Heart left ventricle (tissue), 16 donors: ENCODE measurements at regions of chr17 and their contacts with region 1.

Region 1: GRCh38 chr17:7989781-7990655 is 12.4 kb upstream of the GUCY2D start:
- DNase-seq: peak; percentile 73 to 92 (median 83)
- ATAC-seq: peak; percentile 54 to 87 (median 84)
- H3K4me3 ChIP-seq: peak overlapping the region; percentile 16 to 75 (median 63)
- H3K27ac ChIP-seq: peak overlapping the region in 5 of 12 donors; percentile 8 to 84 (median 62)
- H3K4me1 ChIP-seq: peaks cover 0 to 19% (median 5%) of the 10 kb centered on the region in 12 donors
- H3K27me3 ChIP-seq: peaks cover 0 to 6% (median 0%) of the 10 kb centered on the region in 9 donors
- CTCF ChIP-seq: peak; percentile 93 to 100 (median 95)
- POLR2A ChIP-seq: no peak

Region 2: GRCh38 chr17:7021993-7022778 is 967.8 kb before region 1 on chr17:
- intact Hi-C with region 1: no loop called
- DNase-seq: peak; percentile 83 to 92 (median 86)
- ATAC-seq: peak; percentile 38 to 71 (median 60)
- H3K4me3 ChIP-seq: peak overlapping the region; percentile 32 to 79 (median 62)
- H3K27ac ChIP-seq: peak overlapping the region; percentile 80 to 99 (median 96)
- H3K4me1 ChIP-seq: peaks cover 8 to 82% (median 42%) of the 10 kb centered on the region in 12 donors
- H3K27me3 ChIP-seq: peaks cover 0 to 24% (median 0%) of the 10 kb centered on the region in 9 donors
- CTCF ChIP-seq: peak; percentile 87 to 99 (median 98)
- POLR2A ChIP-seq: peak in 1 of 2 donors; percentile 52

Region 3: DNA sequence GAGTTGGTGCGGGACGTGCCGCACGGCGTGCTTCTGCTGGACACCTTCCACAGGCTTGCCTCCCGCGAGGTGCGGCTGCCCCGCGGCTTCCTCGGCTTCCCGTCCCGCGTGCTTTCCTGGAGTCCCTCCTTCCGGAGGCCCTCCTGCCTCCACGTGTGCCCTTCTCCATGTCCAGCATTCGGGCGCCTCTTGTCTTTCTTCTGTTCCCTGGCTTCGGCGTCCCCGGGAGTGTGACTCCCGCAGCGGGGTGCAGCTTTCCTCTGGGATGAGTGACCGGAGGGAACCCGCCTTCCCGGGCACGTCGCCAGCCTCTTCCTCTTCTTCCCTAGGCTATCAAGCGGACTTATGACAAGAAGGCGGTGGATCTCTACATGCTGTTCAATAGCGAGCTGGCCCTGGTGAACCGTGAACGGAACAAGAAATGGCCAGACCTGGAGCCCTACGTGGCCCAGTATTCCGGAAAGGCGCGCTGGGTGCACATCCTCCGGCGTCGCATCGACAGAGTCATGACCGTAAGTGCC is 249.5 kb before region 1 on chr17:
- intact Hi-C with region 1: loop called in 8 of 10 experiments (anchors 2 to 10 kb)
- DNase-seq: no peak
- ATAC-seq: peak in 1 of 4 donors; percentile 30
- H3K4me3 ChIP-seq: peak overlapping the region in 8 of 12 donors; percentile 12 to 35 (median 24)
- H3K27ac ChIP-seq: no peak overlapping the region
- H3K4me1 ChIP-seq: peaks cover 0 to 13% (median 0%) of the 10 kb centered on the region in 12 donors
- H3K27me3 ChIP-seq: peaks cover 0 to 13% (median 4%) of the 10 kb centered on the region in 9 donors
- CTCF ChIP-seq: no peak
- POLR2A ChIP-seq: no peak

Region 4: DNA sequence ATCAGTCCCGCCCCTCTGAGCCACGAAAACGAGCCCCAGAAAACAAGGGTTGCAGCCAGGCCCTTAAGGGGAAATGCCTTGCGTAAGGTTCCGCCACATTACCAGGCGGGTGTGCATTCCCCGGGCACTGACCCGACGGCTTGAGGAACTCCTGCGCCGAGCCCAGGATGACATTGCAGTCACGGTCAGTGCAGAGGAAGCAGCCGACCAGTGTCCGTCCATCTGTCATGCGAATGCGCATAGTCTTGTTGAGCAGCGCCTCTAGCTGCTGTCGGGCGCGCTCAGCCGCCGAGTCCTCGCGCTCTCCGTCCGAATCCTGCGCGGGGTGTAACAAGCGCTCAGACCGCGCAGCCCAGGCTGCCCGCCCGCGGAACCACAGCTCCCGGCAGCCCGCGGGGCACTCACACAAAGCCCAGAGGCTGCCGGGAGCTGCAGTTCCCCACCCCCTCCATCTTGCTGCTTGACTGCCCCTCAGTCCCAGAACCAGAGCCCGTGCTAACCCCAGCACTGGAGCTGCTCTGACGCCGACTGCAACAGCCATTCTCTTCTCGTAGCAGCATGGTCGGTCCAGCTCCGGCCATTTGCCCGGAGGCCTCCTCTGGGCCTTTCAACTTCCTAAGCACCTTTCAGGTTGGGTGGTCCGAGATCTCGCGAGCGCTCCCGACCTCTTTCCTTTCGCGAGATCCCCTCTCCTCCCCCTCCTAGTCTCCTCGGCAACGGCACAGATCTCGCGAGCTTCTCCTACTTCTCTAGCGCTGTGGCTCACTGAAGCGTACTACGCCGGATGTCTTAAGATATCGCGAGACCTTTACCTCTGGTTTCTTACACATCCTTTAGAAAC is 132.9 kb before region 1 on chr17 and contains the start of gene NAA38:
- intact Hi-C with region 1: loop called in 8 of 10 experiments (anchors 2 to 5 kb)
- DNase-seq: peak; percentile 96 to 98 (median 97)
- ATAC-seq: peak; percentile 87 to 90 (median 90)
- H3K4me3 ChIP-seq: peak within 1 kb of the TSS; percentile 39 to 85 (median 68)
- H3K27ac ChIP-seq: peak within 1 kb of the TSS; percentile 74 to 97 (median 92)
- H3K4me1 ChIP-seq: peaks cover 0 to 45% (median 33%) of the 10 kb centered on the region in 12 donors
- H3K27me3 ChIP-seq: no peaks in the 10 kb centered on the region
- CTCF ChIP-seq: peak in 10 of 12 donors; percentile 12 to 74 (median 44)
- POLR2A ChIP-seq: peak in 1 of 2 donors; percentile 32
- total RNA-seq, gene NAA38: 60.9 to 141 (median 72.4) TPM

Region 5: DNA sequence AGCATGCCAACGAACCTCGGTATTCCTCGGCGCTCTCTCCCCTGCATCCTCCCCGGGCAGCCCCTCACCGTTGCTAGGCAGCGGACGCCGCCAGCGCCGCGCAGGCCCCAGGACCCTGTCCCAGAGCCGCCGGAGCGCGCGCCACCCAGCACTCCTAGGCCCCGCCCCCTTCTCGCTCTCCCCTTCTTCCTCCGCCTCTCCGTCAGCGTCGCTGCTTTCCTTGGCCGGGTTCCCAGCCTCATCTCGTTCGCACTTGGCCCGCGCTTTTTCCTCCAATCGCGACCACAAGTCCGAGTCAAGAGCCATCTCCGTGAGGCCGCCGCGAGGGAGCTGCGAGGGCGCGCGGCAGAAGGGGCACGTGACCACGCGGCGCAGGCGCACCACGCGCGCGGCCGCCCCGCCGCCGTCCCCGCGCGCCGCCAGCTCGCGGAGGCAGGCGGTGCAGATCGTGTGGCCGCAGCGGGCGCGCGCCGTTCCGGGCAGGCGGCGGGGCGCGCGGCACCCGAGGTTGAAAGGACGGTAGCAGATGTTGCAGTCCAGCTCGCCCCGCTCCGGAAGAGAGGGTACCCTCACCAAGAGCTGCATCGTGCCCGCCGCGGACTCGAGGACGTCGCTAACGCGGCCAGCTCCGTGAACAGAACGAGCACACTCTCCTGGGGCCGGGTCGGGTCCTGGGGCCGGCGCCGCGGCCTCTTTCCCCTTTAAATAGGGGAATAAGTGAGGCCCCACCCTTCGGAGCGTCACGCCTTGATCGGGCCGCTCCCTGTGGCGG is 74.2 kb before region 1 on chr17 and contains the start of gene RNF227:
- intact Hi-C with region 1: loop called (anchors 1 to 2 kb)
- DNase-seq: peak; percentile 92 to 94 (median 92)
- ATAC-seq: peak; percentile 84 to 92 (median 90)
- H3K4me3 ChIP-seq: peak within 1 kb of the TSS; percentile 37 to 83 (median 63)
- H3K27ac ChIP-seq: peak within 1 kb of the TSS; percentile 85 to 98 (median 95)
- H3K4me1 ChIP-seq: peaks cover 0 to 32% (median 25%) of the 10 kb centered on the region in 12 donors
- H3K27me3 ChIP-seq: no peaks in the 10 kb centered on the region
- CTCF ChIP-seq: peak in 1 of 12 donors; percentile 13
- POLR2A ChIP-seq: peak in 1 of 2 donors; percentile 30
- total RNA-seq, gene RNF227: 0.51 to 4.9 (median 1.1) TPM

Region 6: GRCh38 chr17:8041249-8041928 is 51.4 kb after region 1 on chr17:
- intact Hi-C with region 1: loop called in 5 of 10 experiments (anchors 2 to 10 kb)
- DNase-seq: no peak
- ATAC-seq: peak; percentile 59 to 83 (median 63)
- H3K4me3 ChIP-seq: no peak overlapping the region
- H3K27ac ChIP-seq: peak overlapping the region in 2 of 12 donors; percentile 15 to 45
- H3K4me1 ChIP-seq: peaks cover 0 to 26% (median 0%) of the 10 kb centered on the region in 12 donors
- H3K27me3 ChIP-seq: peaks cover 0 to 27% (median 10%) of the 10 kb centered on the region in 9 donors
- CTCF ChIP-seq: peak; percentile 44 to 72 (median 56)
- POLR2A ChIP-seq: no peak